Left cardiac atrium (tissue), 4 donors: ENCODE measurements at regions of chr1 and their contacts with region 1.

Region 1: DNA sequence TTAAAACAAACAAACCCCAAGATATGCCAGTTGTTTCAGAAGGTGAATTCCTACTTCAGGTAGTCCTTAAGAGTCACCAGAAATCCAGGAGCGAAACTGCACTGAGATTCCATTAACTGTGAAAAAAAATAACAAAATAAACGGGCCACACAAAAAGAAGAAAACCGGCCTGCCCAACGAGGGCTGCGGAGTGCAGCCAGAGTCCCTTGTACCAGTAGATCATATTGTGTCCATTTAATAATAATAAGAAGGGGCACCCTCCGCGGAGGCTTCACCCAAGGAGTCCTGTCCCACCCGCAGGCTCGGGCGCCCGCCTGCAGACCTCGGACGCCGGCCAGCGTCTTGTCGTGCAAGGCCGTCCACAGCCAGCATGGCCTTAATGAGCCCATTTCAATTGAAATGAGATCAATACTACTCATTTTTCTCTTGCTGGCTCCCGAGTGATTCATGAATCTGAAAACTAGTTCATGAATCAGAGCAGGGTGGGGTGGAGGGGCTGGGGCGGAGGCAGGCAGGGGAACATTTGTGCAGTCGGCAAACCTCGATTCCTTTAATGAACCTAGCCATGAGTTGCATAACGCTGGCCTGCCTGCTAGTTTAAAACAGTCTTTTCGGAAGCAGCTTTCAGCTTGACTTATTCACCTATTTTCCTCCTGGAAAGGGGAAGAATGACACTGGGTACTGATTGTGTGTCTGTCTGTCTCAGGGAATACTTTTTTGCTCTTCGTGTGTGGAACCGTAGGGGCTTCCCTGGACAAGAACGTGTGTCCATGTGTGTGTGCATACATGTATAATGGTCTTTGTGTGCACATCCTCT is 113.1 kb upstream of the IRF2BP2 start:
- DNase-seq: peak; percentile 81
- ATAC-seq: peak in 1 of 2 donors; percentile 52

Region 2: DNA sequence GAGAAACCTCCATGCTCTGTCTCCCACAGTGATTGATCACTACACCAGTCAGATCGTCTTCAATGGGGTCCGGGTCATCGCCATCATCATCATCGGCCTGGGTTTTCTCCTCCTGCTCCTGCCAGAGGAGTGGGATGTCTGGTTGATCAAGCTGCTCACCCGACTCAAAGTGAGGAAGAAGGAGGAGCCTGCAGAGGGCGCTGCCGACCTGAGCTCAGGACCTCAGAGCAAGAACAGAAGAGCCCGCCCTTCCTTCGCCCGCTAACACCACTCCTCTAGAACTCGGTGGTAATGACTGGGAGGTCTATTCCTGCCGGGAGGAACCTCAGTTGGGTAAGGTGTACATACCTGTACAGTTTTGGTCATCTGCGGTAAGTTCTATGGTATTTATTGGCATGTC is 400.1 kb before region 1 on chr1:
- intact Hi-C with region 1: no loop called
- DNase-seq: peak; percentile 37
- ATAC-seq: no peak

Region 3: DNA sequence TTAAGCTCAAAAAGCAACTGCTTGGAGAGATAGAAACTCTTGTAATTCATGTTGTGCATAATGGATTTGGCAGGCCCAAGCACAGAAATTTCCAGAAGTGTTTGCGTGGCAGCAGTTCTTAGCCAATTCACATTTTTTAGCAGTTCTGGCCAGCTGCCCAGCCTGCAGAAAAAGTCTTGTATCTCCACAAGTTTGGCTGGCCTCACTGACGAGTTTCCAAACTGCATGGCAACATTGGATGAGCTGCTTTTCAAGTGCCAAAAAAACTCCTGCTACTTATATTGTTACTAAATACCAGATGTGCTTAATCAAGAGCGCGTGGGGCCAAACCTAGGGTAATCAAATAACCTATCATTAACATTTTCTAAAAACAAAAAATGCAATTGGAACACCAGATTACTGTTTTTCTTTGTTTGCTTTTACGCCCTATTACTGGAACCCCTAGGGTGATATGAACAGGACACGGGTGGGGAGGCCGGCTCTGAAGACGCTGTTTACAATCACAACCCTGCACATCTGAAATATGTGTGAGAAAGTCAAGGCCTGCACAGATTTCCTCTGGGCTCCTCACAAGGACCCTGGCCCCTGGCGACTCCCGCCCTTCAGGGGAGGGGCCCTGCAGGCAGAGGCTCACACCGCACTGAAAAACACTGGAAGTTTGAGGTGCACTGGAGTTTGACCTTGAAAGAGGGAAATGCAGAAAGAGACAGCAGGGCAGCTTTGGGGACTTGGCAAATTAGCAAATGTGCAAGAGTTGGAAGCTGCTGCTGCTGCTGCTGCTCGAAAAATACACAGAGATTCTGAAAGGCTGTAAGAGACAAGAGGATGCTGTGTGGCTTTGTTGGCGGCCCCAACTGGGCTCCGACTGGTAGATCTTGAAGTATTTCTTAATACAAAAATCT is 188.9 kb before region 1 on chr1:
- intact Hi-C with region 1: loop called in 1 of 2 experiments (anchors 10 kb)
- DNase-seq: peak; percentile 96
- ATAC-seq: peak; percentile 24 to 29

Region 4: DNA sequence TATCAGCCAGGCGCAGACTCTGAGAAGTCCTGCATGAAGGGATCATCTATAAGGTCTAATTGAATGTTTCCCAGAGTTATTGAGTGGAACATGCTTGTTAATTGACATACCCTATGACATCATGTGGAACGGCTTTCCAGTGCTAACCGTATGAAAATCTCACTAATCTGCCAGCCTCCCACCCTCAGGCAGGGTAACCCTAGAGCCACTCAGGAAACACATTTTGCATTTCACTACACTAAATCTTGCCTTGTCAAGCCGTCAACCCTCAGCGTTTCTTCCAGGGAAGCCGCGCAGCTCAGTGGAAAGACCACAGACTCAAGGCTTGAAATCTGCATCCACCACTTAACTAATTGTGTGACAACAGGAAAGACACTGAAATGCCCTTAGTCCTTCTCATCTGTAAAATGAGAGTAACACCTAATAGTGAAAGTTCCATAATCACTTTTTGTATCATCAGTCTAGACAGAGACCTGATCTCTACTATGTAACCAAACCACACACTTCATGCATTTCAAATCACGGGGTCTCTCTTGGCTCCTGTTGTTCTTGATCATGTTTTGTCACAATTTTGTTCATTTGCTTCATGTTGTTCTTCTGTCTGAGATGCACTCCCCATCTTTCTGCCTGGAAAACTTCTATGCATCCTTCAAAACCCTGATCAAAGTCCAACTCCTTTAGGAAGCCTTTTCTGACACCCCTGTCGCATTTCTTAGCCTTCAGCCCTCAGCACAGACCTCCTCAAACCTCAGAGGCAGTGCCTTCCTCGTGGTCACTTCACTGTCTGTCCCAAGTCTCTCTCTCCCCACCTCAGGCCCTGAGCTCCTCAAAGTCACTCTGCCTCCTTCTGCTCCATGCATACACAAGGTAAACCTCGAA is 159.0 kb after region 1 on chr1:
- intact Hi-C with region 1: loop called (anchors 2 to 10 kb)
- DNase-seq: no peak
- ATAC-seq: no peak

Region 5: DNA sequence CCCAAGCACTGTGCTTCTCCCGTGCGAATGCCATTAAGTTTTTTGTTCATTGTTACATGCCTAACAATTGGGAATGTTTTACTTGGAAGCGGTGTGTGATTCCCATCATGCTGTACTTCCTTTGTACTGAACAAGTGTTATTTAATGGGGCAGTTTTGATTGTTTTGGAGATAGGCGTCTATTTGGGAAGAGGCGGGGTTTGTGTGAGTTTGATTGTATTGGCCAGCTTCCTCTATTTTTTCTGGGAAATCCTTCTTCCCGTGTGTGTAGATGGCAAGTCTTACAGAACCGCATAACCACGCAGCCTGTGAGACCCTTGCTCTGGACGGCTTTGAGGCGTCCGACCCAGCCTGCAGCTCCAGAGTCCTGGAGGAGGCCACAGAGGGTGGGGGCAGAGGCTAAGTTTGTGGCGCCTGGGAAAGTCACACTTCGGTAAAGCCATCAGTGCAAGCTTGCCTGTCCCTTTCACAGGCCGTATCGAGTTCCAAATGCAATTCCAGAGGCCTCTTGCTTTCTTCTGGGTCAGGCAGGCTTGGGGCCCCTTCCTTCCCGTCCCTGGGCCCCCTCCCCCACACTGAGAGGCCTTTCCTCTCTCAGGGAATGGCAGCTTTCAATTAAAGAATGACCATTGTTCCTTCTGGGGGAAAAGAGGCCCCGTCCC is 195.2 kb after region 1 on chr1:
- intact Hi-C with region 1: loop called in 1 of 2 experiments (anchors 10 kb)
- DNase-seq: peak; percentile 61
- ATAC-seq: peak; percentile 15 to 60

Region 6: GRCh38 chr1:234997201-234997895 is 274.2 kb after region 1 on chr1:
- intact Hi-C with region 1: loop called in 1 of 2 experiments (anchors 10 kb)
- DNase-seq: peak; percentile 99
- ATAC-seq: peak; percentile 95 to 96